Transverse colon (tissue), 4 donors: ENCODE measurements at regions of chr3 and their contacts with region 1.

Region 1: DNA sequence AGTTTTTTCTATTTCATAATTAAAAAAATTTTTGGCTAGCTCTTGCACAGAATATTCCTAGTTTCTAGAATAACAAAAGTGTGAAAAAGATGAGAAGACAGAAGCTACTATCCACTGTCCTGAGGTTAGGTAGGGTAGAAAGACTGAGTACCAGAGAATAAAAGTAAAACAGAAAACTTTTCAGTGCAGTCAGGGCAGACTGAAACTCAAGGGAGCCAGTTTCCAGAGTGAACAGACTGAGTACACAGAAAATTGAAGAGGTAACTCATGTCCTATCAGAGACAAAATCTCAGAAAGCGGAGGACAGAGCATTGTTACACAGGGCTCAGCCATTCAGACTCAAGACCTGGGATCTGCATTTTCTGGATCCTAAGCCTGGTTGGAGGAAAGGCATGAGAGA is 8.8 kb upstream of the FBXO40 start:
- DNase-seq: no peak
- H3K4me3 ChIP-seq: no peak overlapping the region
- H3K27ac ChIP-seq: no peak overlapping the region
- H3K4me1 ChIP-seq: no peaks in the 10 kb centered on the region
- H3K27me3 ChIP-seq: no peaks in the 10 kb centered on the region
- CTCF ChIP-seq: no peak
- EP300 ChIP-seq: no peak
- POLR2A ChIP-seq: no peak

Region 2: DNA sequence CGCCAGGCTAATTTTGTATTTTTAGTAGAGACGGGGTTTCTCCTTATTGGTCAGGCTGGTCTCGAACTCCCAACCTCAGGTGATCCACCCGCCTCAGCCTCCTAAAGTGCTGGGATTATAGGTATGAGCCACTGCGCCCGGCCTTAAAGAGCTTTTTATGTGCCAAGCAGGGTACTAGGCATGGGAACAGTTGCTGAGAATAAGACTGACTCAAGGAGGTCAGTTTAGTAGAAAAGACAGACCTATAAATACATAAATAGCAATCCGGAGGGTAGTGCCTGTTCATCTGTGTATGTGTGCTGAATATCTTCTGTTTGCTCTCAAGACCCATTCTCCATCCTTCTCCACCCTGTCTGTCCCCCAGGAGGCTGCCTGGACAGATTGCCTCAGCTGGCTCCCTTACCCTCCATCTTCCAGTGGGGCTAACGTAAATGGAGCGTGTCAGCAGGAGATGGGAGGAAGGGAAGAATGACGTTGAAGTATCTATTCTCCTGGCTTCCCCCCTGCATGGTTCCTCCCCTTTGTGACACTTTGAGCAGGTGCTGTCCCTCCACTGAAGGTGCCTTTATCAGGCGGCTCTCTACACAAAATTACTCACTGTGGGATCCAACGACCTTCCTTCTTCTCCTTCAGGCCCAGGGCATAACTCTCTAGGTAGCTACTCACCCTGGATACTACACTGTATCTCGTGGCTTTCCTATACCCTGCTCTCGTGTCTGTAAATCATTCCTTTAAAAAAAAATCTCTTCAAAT is 39.9 kb after region 1 on chr3:
- in situ Hi-C with region 1: no loop called
- intact Hi-C with region 1: loop called (anchors 1 kb)
- DNase-seq: no peak
- H3K4me3 ChIP-seq: no peak overlapping the region
- H3K27ac ChIP-seq: no peak overlapping the region
- H3K4me1 ChIP-seq: no peaks in the 10 kb centered on the region
- H3K27me3 ChIP-seq: no peaks in the 10 kb centered on the region
- CTCF ChIP-seq: no peak
- EP300 ChIP-seq: no peak
- POLR2A ChIP-seq: no peak